Dorsolateral prefrontal cortex (tissue), 120 donors: ENCODE measurements at regions of chr6 and their contacts with region 1.

Region 1: DNA sequence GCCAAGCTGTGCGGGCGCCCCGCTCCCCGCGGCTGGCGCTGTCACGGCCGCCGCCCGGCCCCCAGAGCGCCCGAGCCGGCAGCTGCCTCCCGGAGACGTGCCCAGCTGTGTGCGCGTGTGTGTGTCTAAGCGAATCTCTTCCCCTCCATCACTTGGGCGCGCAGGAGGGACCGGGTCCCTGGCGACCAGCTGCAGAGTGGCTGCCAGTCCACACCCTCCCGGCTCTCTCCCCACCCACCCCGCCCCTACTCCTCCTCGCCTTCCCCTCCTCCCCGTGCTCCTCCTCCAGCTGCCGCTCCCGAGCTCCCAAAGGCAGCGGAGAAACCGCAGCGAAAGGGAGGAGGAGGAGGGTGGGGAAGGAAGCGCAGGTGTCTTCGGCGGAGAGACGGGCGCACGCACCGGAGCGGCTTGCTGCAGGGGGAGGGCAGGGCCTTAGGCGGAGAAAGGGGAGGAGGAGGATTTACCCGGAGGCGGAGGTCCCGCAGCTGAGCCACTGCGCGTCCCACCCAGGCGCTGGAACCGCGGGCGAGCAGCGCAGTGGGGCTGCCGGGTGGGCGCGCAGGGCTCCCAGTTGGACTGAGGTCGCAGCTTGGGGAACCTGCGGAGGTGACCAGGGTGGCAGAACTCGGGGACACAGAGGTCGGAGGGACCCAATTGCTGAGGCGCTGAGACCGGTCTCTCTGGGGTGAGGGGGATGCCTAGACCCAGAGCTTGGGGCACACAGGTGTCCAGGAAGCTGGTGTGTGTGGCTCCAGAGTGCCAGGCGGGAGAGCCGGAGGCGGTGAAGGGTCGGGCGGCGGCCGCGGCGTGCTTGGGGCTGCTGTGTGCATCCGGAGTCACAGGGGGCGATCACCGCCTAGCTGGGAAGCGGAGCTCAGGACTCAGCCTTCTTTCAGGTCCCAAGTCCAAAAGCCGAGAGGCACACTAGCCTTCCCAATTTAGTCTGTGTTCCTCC is at the start of gene HS3ST5:
- DNase-seq: peak; percentile 14 to 79 (median 71)
- H3K4me3 ChIP-seq: peak within 1 kb of the TSS; percentile 45 to 91 (median 80)
- H3K27ac ChIP-seq: peak within 1 kb of the TSS; percentile 36 to 97 (median 91)
- H3K27me3 ChIP-seq: no peaks in the 10 kb centered on the region
- CTCF ChIP-seq: peak in 52 of 56 donors; percentile 19 to 69 (median 50)
- total RNA-seq, gene HS3ST5: 3.0 to 17.2 (median 7.8) TPM

Region 2: DNA sequence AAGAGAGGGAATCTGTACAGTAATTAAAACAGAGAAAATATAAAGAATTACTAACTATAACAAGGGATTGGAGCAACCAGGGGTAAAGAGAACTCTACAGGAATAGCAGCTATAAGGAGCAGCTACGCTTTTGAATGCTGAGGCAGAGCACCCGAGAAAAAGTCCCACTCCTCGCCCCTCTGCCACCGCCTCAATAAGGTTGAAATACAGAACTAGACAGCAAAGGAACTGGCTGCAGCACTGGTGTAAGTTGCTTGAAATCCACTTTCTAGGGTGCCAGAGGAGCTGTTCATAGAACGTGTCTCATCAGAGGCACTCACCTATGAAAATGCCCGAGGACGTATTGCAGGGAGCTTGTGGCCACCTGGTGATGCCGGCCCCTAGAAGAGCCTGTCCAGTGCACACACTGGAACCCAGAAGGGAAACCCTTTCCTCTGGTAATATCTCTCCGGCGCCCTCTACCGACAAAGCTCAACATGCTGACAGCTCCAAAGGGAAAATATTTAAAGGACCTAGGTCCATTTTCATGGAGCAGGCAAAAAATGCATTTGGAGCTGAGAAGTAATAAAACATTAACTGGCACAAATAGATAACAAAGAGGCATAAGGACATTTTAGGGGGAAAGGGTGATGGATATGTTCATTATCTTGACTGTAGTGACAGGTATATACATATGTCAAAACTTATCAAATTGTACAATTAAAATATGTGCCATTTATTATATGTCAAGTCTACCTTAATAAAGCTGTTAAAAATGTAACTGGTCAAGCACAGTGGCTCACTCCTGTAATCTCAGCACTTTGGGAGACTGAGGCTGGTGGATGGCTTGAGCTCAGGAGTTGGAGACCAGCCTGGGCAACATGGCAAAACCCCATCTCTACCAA is 234.7 kb before region 1 on chr6:
- intact Hi-C with region 1: loop called (anchors 5 kb)
- DNase-seq: peak; percentile 23 to 89 (median 75)
- H3K4me3 ChIP-seq: peak overlapping the region in 23 of 59 donors; percentile 2 to 46 (median 21)
- H3K27ac ChIP-seq: peak overlapping the region in 51 of 59 donors; percentile 9 to 83 (median 58)
- H3K27me3 ChIP-seq: no peaks in the 10 kb centered on the region
- CTCF ChIP-seq: peak; percentile 24 to 82 (median 69)

Region 3: GRCh38 chr6:114167583-114168576 is 175.2 kb before region 1 on chr6:
- intact Hi-C with region 1: loop called in 1 of 2 experiments (anchors 10 kb)
- DNase-seq: no peak
- H3K4me3 ChIP-seq: peak overlapping the region in 2 of 59 donors; percentile 1 to 15
- H3K27ac ChIP-seq: peak overlapping the region in 27 of 59 donors; percentile 0 to 71 (median 21)
- H3K27me3 ChIP-seq: no peaks in the 10 kb centered on the region
- CTCF ChIP-seq: no peak

Region 4: GRCh38 chr6:114276769-114277168 is 66.3 kb before region 1 on chr6:
- intact Hi-C with region 1: loop called (anchors 5 to 10 kb)
- DNase-seq: no peak
- H3K4me3 ChIP-seq: no peak overlapping the region
- H3K27ac ChIP-seq: no peak overlapping the region
- H3K27me3 ChIP-seq: no peaks in the 10 kb centered on the region
- CTCF ChIP-seq: no peak